OCI-LY7 (cell line): ENCODE measurements at regions of chr5 and their contacts with region 1.

Region 1: GRCh38 chr5:158174918-158175851 is 316.2 kb upstream of the CLINT1 start:
- DNase-seq: peak; percentile 90
- H3K4me3 ChIP-seq: no peak overlapping the region
- H3K27ac ChIP-seq: peak overlapping the region; percentile 31
- H3K4me1 ChIP-seq: peaks cover 49% of the 10 kb centered on the region
- CTCF ChIP-seq: peak; percentile 95

Region 2: DNA sequence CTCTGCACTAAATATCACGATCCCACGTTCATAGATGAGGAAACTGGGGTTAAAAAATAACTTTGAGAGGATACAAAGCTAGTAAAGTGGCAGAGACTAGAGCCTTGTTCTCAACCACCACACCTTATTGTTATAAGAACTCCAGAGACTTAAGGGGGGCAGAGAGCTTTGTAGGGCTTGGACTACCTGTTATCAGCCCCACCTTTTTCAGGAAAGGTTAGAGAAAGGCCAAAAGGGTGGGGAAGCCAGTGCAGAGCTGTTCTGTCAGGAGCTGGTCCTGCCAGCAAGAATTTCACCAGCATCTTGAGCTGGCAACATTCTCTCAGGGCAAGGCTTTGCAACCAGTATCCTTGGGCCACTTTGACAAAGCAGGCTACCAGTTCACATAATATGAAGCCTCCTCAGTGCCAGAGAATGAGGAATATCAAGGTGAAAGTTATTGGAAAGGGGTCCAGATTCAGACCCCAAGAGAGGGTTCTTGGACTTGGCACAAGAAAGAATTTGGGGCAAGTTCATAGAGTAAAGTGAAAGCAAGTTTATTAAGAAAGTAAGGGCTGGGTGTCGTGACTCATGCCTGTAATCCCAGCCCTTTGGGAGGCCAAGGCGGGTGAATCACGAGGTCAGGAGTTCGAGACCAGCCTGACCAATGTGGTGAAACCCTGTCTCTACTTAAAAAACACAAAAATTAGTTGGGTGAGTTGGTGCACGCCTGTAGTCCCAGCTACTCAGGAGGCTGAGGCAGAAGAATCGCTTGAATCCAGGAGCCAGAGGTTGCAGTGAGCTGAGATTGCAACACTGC is 250.1 kb before region 1 on chr5:
- CTCF ChIA-PET with region 1: no interaction called
- POLR2A ChIA-PET with region 1: no interaction called
- intact Hi-C with region 1: no loop called
- DNase-seq: no peak
- H3K4me3 ChIP-seq: no peak overlapping the region
- H3K27ac ChIP-seq: no peak overlapping the region
- H3K4me1 ChIP-seq: peaks cover 2% of the 10 kb centered on the region
- CTCF ChIP-seq: no peak

Region 3: DNA sequence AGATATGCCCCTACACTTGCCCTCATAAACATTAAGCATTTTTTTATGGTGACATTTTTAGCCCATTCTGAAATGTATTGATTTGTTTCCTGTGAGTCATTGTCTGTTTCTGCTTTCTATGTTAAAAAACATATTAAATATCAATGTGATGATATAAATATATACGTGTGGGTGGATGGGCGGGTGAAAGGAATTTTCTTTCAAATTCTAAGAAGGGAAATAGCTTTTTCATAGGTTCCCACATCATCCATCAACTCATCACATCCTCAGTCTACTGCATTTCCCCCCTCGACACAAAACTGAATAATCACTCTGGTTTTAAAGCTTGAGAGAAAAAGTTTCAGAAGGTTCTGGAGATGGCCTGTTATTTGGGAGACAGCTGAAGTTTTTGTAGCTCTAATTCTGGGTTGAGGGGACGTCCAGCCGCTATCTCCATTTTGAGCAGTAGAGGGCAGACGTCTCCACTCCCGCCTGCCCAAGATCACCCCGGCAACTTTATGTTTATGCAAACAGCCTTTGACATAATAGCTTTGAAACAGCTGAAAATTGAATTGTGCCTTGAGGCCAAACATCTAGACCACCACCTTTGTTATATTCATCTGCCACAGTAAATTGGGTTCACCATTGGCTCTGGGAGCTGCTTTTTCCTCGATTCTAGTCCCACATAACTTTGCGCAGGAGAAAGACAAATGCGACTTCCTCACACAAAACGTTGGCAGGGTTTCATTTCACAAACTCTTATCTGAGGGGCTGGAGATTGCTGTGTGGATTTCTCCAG is 100.0 kb before region 1 on chr5:
- CTCF ChIA-PET with region 1: interaction called, 8 read pairs
- POLR2A ChIA-PET with region 1: no interaction called
- intact Hi-C with region 1: loop called (anchors 5 kb)
- DNase-seq: peak; percentile 69
- H3K4me3 ChIP-seq: no peak overlapping the region
- H3K27ac ChIP-seq: no peak overlapping the region
- H3K4me1 ChIP-seq: peaks cover 4% of the 10 kb centered on the region
- CTCF ChIP-seq: peak; percentile 98

Region 4: DNA sequence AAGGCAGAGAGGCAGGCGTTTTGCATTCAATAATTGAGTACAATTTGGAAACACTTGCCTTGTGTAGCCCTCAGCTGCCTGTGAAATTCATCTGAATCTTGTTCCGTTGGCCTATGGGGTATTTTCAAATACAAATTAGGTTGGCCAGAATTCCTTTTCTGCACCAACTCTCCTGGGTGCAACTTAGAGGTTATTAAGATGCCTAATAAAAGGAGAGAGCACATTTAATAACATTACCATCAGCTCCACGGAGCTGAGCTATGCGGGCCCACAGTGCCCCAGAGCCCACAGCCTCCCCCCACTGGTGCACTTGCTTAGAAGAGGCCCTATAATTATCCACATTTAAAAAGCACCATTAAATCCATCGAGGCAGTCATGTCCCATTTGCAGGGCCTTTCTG is 51.3 kb after region 1 on chr5:
- CTCF ChIA-PET with region 1: no interaction called
- POLR2A ChIA-PET with region 1: no interaction called
- intact Hi-C with region 1: loop called (anchors 5 kb)
- DNase-seq: no peak
- H3K4me3 ChIP-seq: no peak overlapping the region
- H3K27ac ChIP-seq: no peak overlapping the region
- H3K4me1 ChIP-seq: no peaks in the 10 kb centered on the region
- CTCF ChIP-seq: no peak

Region 5: GRCh38 chr5:158398360-158399201 is 223.4 kb after region 1 on chr5:
- CTCF ChIA-PET with region 1: no interaction called
- POLR2A ChIA-PET with region 1: interaction called, 4 read pairs
- intact Hi-C with region 1: loop called (anchors 1 kb)
- DNase-seq: peak; percentile 99
- H3K4me3 ChIP-seq: peak overlapping the region; percentile 31
- H3K27ac ChIP-seq: peak overlapping the region; percentile 95
- H3K4me1 ChIP-seq: peaks cover 54% of the 10 kb centered on the region
- CTCF ChIP-seq: no peak

Region 6: DNA sequence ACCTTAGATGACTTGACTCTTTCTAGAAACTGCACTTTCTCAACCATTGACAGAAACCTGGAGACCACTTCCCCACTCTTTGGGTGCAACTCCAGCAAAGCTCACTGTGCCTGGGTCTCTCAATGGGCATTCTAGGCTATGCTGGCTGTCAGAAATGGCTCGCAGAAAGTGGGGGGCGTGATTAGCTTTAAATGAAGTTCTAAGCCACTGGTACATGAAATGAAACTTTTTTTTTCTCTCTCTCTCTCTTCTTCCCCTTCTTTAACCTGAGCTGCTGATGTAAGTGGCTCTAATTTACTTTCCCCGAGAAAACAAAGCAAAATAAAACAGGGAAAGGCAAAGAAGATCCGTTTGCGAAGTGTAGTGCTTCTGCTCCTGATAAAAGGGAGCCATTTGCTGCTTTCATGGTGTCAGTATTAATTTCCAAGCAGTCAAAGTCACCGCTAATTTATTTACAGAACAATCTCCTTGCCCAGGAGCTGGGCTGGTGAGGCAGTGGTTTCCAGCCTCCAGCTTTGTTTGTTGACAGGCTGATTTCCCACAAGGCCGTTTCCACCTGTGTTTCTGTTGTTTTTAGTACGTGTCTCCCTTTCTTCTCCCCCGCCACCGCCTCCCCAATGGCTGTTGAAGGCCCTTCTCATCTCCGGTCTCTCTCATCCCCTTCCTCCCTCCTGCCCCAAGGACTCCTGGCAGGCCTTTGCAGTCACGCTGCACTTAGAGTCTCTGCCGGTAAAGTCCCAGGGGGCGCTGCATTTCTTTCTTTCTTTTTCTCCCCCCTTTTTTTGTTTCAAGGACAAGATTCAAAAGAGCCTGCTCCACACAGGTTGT is 501.7 kb after region 1 on chr5:
- CTCF ChIA-PET with region 1: no interaction called
- POLR2A ChIA-PET with region 1: interaction called, 3 read pairs
- intact Hi-C with region 1: loop called (anchors 5 kb)
- DNase-seq: peak; percentile 85
- H3K4me3 ChIP-seq: peak overlapping the region; percentile 48
- H3K27ac ChIP-seq: peak overlapping the region; percentile 73
- H3K4me1 ChIP-seq: peaks cover 30% of the 10 kb centered on the region
- CTCF ChIP-seq: peak; percentile 93

Region 7: DNA sequence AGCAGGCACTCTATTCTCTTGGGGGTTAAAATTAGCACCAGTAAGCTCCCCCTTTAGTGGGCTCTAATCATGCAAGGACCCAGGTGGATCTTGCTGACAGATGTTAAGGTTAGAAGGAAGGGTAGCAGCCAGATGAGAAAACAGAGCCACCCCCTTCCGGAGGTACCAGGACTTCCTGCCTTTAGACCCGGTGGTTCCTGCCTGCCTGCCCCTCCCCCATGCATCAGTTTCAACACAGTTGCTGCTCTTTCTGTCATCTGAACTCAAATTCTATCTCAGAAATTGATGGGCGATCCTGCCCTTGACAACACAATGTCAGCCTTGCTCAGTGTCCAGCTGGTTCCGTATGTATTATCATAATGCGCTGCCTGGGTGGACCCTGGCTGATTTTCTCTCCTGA is 637.2 kb after region 1 on chr5:
- CTCF ChIA-PET with region 1: interaction called, 7 read pairs
- POLR2A ChIA-PET with region 1: interaction called, 5 read pairs
- intact Hi-C with region 1: loop called (anchors 2 kb)
- DNase-seq: peak; percentile 99
- H3K4me3 ChIP-seq: peak overlapping the region; percentile 57
- H3K27ac ChIP-seq: peak overlapping the region; percentile 94
- H3K4me1 ChIP-seq: peaks cover 96% of the 10 kb centered on the region
- CTCF ChIP-seq: no peak

Region 8: GRCh38 chr5:159106569-159107282 is 931.5 kb after region 1 on chr5:
- CTCF ChIA-PET with region 1: interaction called, 4 read pairs
- POLR2A ChIA-PET with region 1: interaction called, 4 read pairs
- intact Hi-C with region 1: loop called (anchors 1 kb)
- DNase-seq: peak; percentile 89
- H3K4me3 ChIP-seq: peak overlapping the region; percentile 51
- H3K27ac ChIP-seq: peak overlapping the region; percentile 2
- H3K4me1 ChIP-seq: peaks cover 42% of the 10 kb centered on the region
- CTCF ChIP-seq: peak; percentile 96